Endothelial cell of umbilical vein (primary cell): ENCODE measurements at regions of chr6 and their contacts with region 1.

Region 1: GRCh38 chr6:75155631-75156030 is 50.2 kb downstream of the COL12A1 start:
- DNase-seq: peak; percentile 44
- H3K4me3 ChIP-seq: no peak overlapping the region
- H3K27ac ChIP-seq: no peak overlapping the region
- H3K4me1 ChIP-seq: peaks cover 25% of the 10 kb centered on the region
- H3K27me3 ChIP-seq: no peaks in the 10 kb centered on the region
- CTCF ChIP-seq: no peak
- POLR2A ChIP-seq: no peak

Region 2: GRCh38 chr6:75201901-75202672 is 46.5 kb after region 1 on chr6:
- CTCF ChIA-PET with region 1: interaction called, 16 read pairs
- POLR2A ChIA-PET with region 1: interaction called, 4 read pairs
- dilution Hi-C with region 1: no loop called
- intact Hi-C with region 1: loop called (anchors 1 kb)
- DNase-seq: peak; percentile 46
- H3K4me3 ChIP-seq: peak overlapping the region in 2 of 3 experiments; percentile 16 to 40
- H3K27ac ChIP-seq: no peak overlapping the region
- H3K4me1 ChIP-seq: peaks cover 26% of the 10 kb centered on the region
- H3K27me3 ChIP-seq: peaks cover 2 to 3% of the 10 kb centered on the region in 2 experiments
- CTCF ChIP-seq: peak in 1 of 2 donors; percentile 16
- POLR2A ChIP-seq: no peak

Region 3: GRCh38 chr6:75230484-75231325 is 75.1 kb after region 1 on chr6:
- CTCF ChIA-PET with region 1: no interaction called
- POLR2A ChIA-PET with region 1: no interaction called
- dilution Hi-C with region 1: no loop called
- intact Hi-C with region 1: no loop called
- DNase-seq: peak; percentile 70
- H3K4me3 ChIP-seq: no peak overlapping the region
- H3K27ac ChIP-seq: no peak overlapping the region
- H3K4me1 ChIP-seq: peaks cover 3% of the 10 kb centered on the region
- H3K27me3 ChIP-seq: no peaks in the 10 kb centered on the region
- CTCF ChIP-seq: peak; percentile 55 to 69
- POLR2A ChIP-seq: no peak

Region 4: DNA sequence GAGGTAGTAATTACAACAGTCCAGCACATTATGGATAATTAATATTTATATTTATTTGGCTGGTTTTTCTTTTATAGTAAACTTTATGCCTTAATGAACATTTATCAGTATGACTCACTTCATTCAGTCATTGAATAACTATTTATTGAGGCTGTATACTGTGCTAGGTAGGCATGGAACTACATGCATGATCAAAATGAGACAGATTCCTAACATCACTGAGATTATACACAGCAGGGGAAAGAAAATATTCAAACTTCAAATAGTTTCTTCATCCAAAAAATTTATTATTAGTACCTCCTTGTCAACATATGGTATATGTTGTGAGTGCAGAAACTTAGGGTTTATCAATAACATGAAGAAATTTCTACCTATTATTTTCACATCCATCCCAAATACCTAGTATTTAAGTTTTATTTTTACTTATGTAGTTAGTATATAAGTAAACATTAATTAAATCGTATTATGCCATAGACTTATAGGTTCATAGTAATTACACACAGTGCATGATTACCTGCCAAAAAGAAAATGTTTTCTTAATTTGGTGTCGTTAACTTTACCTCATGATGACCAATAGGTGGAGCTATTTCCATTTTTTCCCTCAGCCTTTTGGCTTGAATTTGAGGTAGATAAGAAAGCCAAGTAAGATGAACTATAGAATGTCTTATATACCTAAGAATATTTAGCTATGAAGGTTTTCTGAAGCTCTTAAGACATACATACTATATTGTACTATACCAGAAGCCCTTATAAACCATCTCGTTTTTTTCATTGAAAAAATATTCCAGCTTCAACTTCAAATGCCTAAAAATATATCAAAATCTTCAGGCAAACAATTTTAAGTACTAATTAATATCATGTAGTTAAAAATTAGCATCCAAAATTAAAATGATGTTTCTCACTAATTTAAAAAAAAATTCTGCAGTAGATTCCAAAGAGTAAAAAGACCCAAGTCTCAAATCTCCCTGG is 141.5 kb after region 1 on chr6:
- CTCF ChIA-PET with region 1: no interaction called
- POLR2A ChIA-PET with region 1: no interaction called
- dilution Hi-C with region 1: no loop called
- intact Hi-C with region 1: no loop called
- DNase-seq: peak; percentile 85
- H3K4me3 ChIP-seq: no peak overlapping the region
- H3K27ac ChIP-seq: no peak overlapping the region
- H3K4me1 ChIP-seq: no peaks in the 10 kb centered on the region
- H3K27me3 ChIP-seq: no peaks in the 10 kb centered on the region
- CTCF ChIP-seq: peak; percentile 25 to 35
- POLR2A ChIP-seq: no peak